Activated CD8-positive, alpha-beta T cell treated with anti-CD3 and anti-CD28 coated beads for 36 hours (primary cell): ENCODE measurements at regions of chr16 and their contacts with region 1.

Region 1: GRCh38 chr16:3059000-3059722 is 6.3 kb upstream of the IL32 start:
- DNase-seq: peak; percentile 87
- ATAC-seq: peak; percentile 86
- H3K4me3 Mint-ChIP-seq: peak overlapping the region; percentile 82
- H3K27ac Mint-ChIP-seq: peak overlapping the region; percentile 93
- H3K4me1 Mint-ChIP-seq: peaks cover 57% of the 10 kb centered on the region
- H3K27me3 Mint-ChIP-seq: no peaks in the 10 kb centered on the region
- CTCF ChIP-seq: peak; percentile 98

Region 2: DNA sequence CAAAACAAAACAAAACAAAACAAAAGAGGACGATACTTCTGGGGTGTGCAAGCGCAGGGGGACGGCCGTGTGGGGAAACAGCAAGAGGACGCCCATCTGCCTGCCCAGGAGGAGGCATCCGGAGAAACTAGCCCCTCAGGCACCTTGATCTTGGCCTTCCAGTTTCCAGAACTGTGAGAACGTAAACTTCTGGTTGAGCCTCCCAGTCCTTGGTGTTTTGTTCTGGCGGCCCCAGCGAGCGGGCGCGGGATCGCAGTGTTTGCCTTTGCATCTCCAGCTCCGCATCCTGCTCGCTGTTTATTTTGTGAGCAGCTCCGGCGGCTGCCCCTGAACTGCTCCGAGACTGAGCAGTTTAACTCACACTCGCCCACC is 13.8 kb before region 1 on chr16:
- CTCF ChIA-PET with region 1: interaction called, 36 read pairs
- POLR2A ChIA-PET with region 1: interaction called, 9 read pairs
- intact Hi-C with region 1: no loop called
- DNase-seq: peak; percentile 60
- ATAC-seq: peak; percentile 60
- H3K4me3 Mint-ChIP-seq: peak overlapping the region; percentile 69
- H3K27ac Mint-ChIP-seq: peak overlapping the region; percentile 15
- H3K4me1 Mint-ChIP-seq: peaks cover 15% of the 10 kb centered on the region
- H3K27me3 Mint-ChIP-seq: peaks cover 38% of the 10 kb centered on the region
- CTCF ChIP-seq: no peak

Region 3: GRCh38 chr16:3094289-3095027 is 35.3 kb after region 1 on chr16:
- CTCF ChIA-PET with region 1: interaction called, 20 read pairs
- POLR2A ChIA-PET with region 1: interaction called, 4 read pairs
- intact Hi-C with region 1: no loop called
- DNase-seq: peak; percentile 78
- ATAC-seq: peak; percentile 53
- H3K4me3 Mint-ChIP-seq: no peak overlapping the region
- H3K27ac Mint-ChIP-seq: peak overlapping the region; percentile 75
- H3K4me1 Mint-ChIP-seq: peaks cover 31% of the 10 kb centered on the region
- H3K27me3 Mint-ChIP-seq: no peaks in the 10 kb centered on the region
- CTCF ChIP-seq: peak; percentile 79

Region 4: DNA sequence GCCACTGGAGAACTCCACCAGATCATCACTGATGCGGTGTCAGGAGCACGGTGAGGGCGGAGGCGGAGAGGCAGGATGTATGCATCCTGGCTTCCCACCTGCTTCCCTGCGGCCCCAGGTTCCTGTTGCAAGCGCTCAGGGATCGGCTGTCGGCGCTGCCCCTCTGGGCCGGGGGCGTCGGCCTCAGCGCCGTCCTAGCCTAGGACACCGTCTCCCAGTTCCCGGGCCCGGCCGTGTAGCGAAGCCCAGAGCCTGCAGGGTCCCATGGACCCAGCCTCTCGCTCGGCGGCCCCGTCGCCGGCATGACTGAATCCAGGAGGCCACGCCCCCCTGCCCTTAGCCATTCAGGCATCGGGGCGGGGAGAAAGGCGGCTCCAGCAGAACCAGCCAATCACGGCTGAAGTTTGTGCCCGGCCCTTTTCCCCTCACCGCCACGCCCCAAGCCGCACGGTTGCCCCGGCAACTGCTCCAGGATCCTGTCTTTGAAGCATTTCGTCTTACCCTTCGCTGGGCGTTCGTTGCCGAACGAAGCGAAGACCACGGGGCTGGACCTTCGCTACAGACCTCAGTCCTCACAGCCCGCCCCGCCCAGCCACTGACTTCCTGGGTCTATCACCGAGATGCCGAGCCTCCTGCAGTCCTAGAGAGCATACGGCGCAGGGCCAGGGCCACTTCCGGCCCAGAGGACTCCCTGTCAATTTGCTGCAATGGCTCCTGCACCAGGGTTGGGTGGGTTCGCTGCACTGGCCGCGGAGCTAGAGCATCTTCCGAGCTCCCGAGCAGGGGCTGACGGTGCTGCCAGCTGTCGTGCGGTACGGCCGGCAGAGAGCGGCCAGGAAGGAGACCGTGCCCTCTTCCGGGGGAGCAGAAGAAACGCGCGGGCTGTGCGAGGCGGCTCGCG is 65.1 kb after region 1 on chr16:
- CTCF ChIA-PET with region 1: interaction called, 288 read pairs
- POLR2A ChIA-PET with region 1: interaction called, 22 read pairs
- intact Hi-C with region 1: loop called (anchors 2 kb)
- DNase-seq: peak; percentile 99
- ATAC-seq: peak; percentile 92
- H3K4me3 Mint-ChIP-seq: peak overlapping the region; percentile 98
- H3K27ac Mint-ChIP-seq: peak overlapping the region; percentile 94
- H3K4me1 Mint-ChIP-seq: peaks cover 37% of the 10 kb centered on the region
- H3K27me3 Mint-ChIP-seq: no peaks in the 10 kb centered on the region
- CTCF ChIP-seq: peak; percentile 52

Region 5: GRCh38 chr16:3150346-3151218 is 91.4 kb after region 1 on chr16:
- CTCF ChIA-PET with region 1: interaction called, 22 read pairs
- POLR2A ChIA-PET with region 1: interaction called, 6 read pairs
- intact Hi-C with region 1: no loop called
- DNase-seq: peak; percentile 98
- ATAC-seq: peak; percentile 84
- H3K4me3 Mint-ChIP-seq: peak overlapping the region; percentile 85
- H3K27ac Mint-ChIP-seq: peak overlapping the region; percentile 89
- H3K4me1 Mint-ChIP-seq: peaks cover 17% of the 10 kb centered on the region
- H3K27me3 Mint-ChIP-seq: peaks cover 4% of the 10 kb centered on the region
- CTCF ChIP-seq: no peak

Region 6: DNA sequence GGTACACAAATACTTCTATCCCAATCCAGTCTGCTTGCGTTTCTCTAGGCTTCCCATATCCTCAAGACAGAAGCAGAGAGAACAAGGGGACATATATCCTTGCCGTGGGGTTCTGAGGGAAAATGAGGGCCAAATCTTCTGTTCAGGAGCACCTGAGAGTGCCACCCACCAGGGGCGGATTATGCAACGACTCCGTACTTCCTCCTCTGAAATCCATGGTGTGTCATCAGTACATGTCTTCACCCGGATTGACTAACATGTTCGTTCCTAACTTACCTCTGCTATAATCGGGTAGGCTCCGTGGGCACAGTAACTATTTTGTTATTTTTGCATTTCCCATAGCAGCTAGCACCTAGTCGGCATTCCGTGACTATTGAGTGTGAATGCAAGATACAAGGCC is 183.5 kb after region 1 on chr16:
- CTCF ChIA-PET with region 1: no interaction called
- POLR2A ChIA-PET with region 1: no interaction called
- intact Hi-C with region 1: no loop called
- DNase-seq: no peak
- ATAC-seq: no peak
- H3K4me3 Mint-ChIP-seq: no peak overlapping the region
- H3K27ac Mint-ChIP-seq: no peak overlapping the region
- H3K4me1 Mint-ChIP-seq: peaks cover 5% of the 10 kb centered on the region
- H3K27me3 Mint-ChIP-seq: no peaks in the 10 kb centered on the region
- CTCF ChIP-seq: no peak